ENCODE measurements at regions of chr10 and their contacts with region 1.

Region 1: GRCh38 chr10:987870-988666 is at the start of gene GTPBP4:
- DNase-seq: peak; percentile 98 to 99
- ATAC-seq: peak; percentile 98 to 100 (median 99)
- H3K4me3 ChIP-seq: peak within 1 kb of the TSS; percentile 56 to 90 (median 80)
- H3K27ac ChIP-seq: peak within 1 kb of the TSS; percentile 86 to 97 (median 94)
- H3K4me1 ChIP-seq: peaks cover 9 to 39% (median 29%) of the 10 kb centered on the region in 9 donors
- H3K27me3 ChIP-seq: no peaks in the 10 kb centered on the region
- CTCF ChIP-seq: peak in 6 of 9 donors; percentile 7 to 57 (median 38)
- total RNA-seq, gene GTPBP4: 25.0 to 41.4 (median 29.4) TPM

Region 2: DNA sequence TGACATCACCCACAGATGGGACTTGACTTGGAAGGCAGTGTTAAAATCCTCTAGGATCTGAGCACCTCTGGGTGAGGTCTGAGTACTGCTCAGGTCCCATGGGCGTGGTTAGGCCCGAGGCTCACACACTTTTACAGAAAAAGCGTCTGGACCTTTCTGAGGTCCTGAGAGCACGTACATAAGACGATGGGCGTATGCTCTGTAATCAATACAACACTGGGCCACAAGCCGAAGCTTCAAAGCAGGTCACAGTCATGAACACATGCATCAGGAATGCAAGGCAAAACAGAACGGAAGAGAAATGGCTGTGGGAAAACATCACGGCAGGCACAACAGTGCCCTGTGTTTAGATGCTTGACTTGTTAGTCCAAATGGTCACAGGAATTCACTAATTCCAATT is 168.7 kb before region 1 on chr10:
- intact Hi-C with region 1: no loop called
- DNase-seq: no peak
- ATAC-seq: no peak
- H3K4me3 ChIP-seq: no peak overlapping the region
- H3K27ac ChIP-seq: peak overlapping the region in 5 of 10 donors; percentile 5 to 61 (median 45)
- H3K4me1 ChIP-seq: peaks cover 13 to 41% (median 30%) of the 10 kb centered on the region in 9 donors
- H3K27me3 ChIP-seq: no peaks in the 10 kb centered on the region
- CTCF ChIP-seq: no peak

Region 3: GRCh38 chr10:844552-844951 is 143.5 kb before region 1 on chr10:
- intact Hi-C with region 1: loop called in 3 of 10 experiments (anchors 10 kb)
- DNase-seq: no peak
- ATAC-seq: peak in 2 of 8 donors; percentile 37 to 50
- H3K4me3 ChIP-seq: no peak overlapping the region
- H3K27ac ChIP-seq: no peak overlapping the region
- H3K4me1 ChIP-seq: peaks cover 0 to 41% (median 20%) of the 10 kb centered on the region in 9 donors
- H3K27me3 ChIP-seq: no peaks in the 10 kb centered on the region
- CTCF ChIP-seq: no peak

Region 4: DNA sequence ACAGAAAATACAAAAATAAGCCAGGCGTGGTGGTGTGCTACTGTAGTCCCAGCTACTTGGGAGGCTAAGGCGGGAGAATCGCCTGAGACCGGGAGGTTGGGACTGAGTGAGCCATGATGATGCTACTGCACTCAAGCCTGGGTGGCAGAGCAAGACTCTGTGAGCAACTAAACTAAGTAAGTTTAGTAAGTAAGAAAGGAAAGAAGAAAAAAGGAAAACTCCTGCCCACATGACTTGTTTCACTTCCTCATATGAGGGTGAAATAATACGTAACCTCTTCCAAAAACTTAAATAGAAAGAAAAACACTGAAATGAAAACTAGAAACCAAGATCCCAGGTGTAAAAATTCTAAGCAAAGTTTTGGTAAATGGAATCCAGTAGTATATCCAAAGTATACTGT is 136.2 kb before region 1 on chr10:
- intact Hi-C with region 1: loop called in 4 of 10 experiments (anchors 10 kb)
- DNase-seq: no peak
- ATAC-seq: no peak
- H3K4me3 ChIP-seq: no peak overlapping the region
- H3K27ac ChIP-seq: no peak overlapping the region
- H3K4me1 ChIP-seq: peaks cover 0 to 28% (median 12%) of the 10 kb centered on the region in 9 donors
- H3K27me3 ChIP-seq: no peaks in the 10 kb centered on the region
- CTCF ChIP-seq: no peak

Region 5: GRCh38 chr10:938990-939678 is 48.9 kb before region 1 on chr10:
- intact Hi-C with region 1: loop called in 6 of 10 experiments (anchors 5 to 10 kb)
- DNase-seq: no peak
- ATAC-seq: peak in 2 of 8 donors; percentile 30 to 44
- H3K4me3 ChIP-seq: no peak overlapping the region
- H3K27ac ChIP-seq: no peak overlapping the region
- H3K4me1 ChIP-seq: peaks cover 0 to 6% (median 0%) of the 10 kb centered on the region in 9 donors
- H3K27me3 ChIP-seq: no peaks in the 10 kb centered on the region
- CTCF ChIP-seq: no peak

Region 6: DNA sequence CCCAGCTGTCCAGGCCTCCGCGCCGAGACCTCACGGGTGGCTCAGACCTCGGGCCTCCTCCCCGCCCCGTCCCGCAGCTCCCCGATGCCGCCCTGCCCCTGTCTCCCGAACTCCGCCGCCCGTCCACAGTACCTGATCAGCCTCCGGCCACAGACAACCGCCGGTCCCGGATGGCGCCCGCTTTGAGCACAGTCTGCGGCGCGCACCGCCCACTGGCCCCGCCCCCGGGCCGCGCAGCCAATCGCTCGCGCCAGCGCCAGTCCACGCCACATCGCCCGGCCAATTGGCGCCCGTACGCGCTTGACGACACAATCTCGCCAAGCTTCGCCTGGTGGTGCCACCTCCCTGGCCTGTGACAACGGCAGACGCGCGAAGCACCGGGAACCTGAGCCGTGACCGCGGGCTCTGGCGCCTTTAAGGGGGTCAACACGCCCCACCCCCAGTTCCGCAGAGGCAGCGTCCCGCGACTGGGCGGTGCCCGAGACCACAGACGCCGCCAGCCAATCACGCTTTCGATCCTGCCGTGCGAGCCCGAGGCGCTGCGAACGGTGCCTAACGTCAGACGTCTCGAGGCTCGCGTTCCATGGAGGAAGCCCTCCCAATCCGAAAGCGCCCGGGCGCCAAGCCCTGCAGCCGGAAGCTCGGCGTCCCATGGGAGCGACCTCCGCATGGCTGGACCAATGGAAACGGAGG is 60.8 kb after region 1 on chr10 and contains the start of gene IDI1:
- intact Hi-C with region 1: loop called in 2 of 10 experiments (anchors 2 to 5 kb)
- DNase-seq: peak; percentile 97 to 98
- ATAC-seq: peak; percentile 94 to 97 (median 96)
- H3K4me3 ChIP-seq: peak within 1 kb of the TSS; percentile 59 to 93 (median 83)
- H3K27ac ChIP-seq: peak within 1 kb of the TSS; percentile 94 to 100 (median 98)
- H3K4me1 ChIP-seq: peaks cover 0 to 72% (median 52%) of the 10 kb centered on the region in 9 donors
- H3K27me3 ChIP-seq: no peaks in the 10 kb centered on the region
- CTCF ChIP-seq: peak in 1 of 9 donors; percentile 11
- total RNA-seq, gene IDI1: 14.4 to 21.9 (median 18.9) TPM

Measured in heart right ventricle (tissue), 16 donors.